Heart left ventricle (tissue), 16 donors: ENCODE measurements at regions of chr13 and their contacts with region 1.

Region 1: DNA sequence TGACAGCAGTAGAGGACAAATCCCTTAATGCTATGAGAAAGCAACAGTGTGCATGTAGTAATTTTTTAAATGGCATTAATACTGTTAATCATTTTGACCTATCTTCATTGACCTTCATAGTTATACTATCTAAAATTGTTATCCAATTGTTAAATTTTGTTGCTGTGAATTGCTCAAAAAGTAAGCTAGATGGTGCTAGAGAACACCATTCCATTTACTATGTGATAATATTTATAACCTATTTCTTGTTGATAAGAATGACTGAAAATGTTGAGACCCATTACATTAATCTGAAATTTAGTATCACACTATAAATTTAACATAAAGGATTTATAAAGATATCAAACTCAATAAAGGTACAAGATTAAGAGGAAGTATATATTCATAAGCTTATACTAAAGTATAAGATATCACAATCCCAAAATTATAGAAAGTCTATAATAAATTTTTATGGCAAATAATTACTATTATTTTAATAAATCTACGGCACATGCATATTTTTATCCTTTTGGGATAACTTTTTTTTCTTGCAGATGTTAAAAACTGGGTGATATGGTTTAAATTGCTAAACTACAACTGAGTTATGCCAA is 1573.3 kb downstream of the PCDH9 start:
- DNase-seq: no peak
- ATAC-seq: no peak
- H3K4me3 ChIP-seq: no peak overlapping the region
- H3K27ac ChIP-seq: no peak overlapping the region
- H3K4me1 ChIP-seq: no peaks in the 10 kb centered on the region
- H3K27me3 ChIP-seq: no peaks in the 10 kb centered on the region
- CTCF ChIP-seq: peak; percentile 20 to 67 (median 42)
- POLR2A ChIP-seq: no peak

Region 2: DNA sequence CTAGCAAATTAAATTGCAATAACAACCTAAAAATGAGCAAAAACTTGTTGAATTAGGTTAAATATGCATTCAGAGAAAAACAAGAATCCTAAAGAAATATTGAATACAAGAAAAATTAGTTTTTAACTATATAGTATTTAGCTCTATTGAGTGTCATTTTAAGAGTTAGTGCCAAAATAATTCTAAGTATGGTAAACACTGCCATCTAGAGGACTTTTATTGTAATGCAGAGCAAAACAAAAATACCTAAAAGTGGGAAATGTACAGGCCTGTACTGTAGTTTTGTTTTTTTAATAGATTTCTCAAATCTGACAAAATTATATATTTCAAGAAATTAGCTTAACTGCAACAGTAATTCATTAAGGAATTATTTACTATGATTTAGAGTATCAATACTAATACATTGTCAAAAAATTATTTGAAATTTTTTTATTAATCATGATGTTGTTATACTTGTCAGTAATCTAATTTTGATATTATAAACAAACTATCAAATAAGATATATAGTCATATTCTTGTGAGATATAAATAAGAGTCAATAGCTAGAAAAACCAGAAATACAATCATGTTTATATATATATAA is 1581.5 kb after region 1 on chr13:
- intact Hi-C with region 1: loop called in 5 of 10 experiments (anchors 5 to 10 kb)
- DNase-seq: no peak
- ATAC-seq: peak in 1 of 4 donors; percentile 65
- H3K4me3 ChIP-seq: peak overlapping the region in 1 of 12 donors; percentile 1
- H3K27ac ChIP-seq: no peak overlapping the region
- H3K4me1 ChIP-seq: peaks cover 0 to 5% (median 0%) of the 10 kb centered on the region in 12 donors
- H3K27me3 ChIP-seq: no peaks in the 10 kb centered on the region
- CTCF ChIP-seq: peak; percentile 72 to 87 (median 82)
- POLR2A ChIP-seq: no peak